ENCODE measurements at regions of chr5 and their contacts with region 1.

Region 1: DNA sequence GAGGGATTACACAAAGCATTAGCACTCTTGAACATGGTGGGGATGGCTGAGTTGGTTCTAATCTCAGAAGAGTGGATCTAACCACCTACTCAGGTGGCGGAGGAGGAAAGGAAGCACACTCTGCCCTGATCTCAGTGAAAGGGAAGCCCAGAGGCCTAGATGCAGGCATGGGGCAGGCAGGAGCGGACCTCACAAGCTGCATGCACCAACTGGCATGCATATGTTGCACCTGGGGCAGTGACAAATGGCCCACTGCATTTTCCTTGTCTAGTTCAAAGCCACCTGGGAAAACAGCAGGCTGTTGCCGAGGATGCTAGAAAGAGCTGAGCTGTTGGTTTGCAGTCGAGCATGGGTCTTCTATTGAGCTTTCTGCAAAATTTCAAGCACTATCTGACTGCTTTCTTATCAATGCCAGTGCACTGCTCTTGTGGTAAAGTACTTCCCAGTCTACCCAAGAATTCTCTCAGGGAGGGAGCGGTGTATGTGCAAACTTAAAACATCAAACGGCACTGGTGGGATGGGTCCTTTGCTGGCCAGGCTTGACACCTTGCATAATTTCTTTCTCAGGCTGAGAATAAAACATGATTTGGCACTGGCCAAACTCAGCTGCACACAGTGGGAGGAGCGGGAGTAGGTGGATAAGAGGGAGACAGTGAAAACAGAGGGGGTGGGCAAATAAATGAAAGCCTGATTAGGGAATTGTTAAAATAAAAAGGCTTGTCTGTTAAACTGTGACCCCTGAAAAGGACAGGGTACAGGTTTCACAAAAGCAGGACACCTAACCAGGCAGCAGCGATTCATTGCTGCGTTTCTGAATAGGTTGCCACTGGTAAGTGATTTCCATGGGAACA is 108.9 kb downstream of the MARCHF3 start:
- DNase-seq: no peak
- ATAC-seq: no peak
- H3K4me3 Mint-ChIP-seq: no peak overlapping the region
- H3K27ac Mint-ChIP-seq: no peak overlapping the region
- H3K4me1 Mint-ChIP-seq: no peaks in the 10 kb centered on the region
- H3K27me3 Mint-ChIP-seq: no peaks in the 10 kb centered on the region

Region 2: DNA sequence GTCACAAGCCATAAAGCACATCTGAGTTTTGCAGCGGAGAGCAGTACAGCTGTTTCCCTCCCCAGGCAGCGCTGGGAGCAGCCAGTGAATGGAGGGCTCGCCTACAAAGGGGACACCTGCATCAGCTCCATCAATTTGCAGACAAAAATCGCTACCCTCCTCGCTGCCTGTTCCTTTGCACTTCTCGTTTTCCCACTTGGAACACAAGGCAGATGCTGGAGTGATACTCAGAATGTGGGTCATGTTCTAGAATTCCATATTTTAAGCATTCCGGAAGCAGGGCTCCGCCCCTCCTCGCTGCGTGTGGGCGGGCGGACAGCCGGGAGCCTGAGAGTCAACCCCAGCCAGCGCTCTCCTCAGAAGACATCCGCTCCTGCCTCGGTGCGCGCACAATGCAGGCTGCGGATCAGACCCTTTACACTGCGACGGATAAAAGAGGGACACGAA is 52.4 kb before region 1 on chr5:
- CTCF ChIA-PET with region 1: no interaction called
- POLR2A ChIA-PET with region 1: no interaction called
- intact Hi-C with region 1: no loop called
- DNase-seq: peak; percentile 55
- ATAC-seq: peak; percentile 83
- H3K4me3 Mint-ChIP-seq: peak overlapping the region; percentile 57
- H3K27ac Mint-ChIP-seq: peak overlapping the region; percentile 32
- H3K4me1 Mint-ChIP-seq: peaks cover 10% of the 10 kb centered on the region
- H3K27me3 Mint-ChIP-seq: no peaks in the 10 kb centered on the region

Region 3: GRCh38 chr5:126965061-126965475 is 43.6 kb after region 1 on chr5:
- CTCF ChIA-PET with region 1: no interaction called
- POLR2A ChIA-PET with region 1: interaction called, 10 read pairs
- intact Hi-C with region 1: no loop called
- DNase-seq: no peak
- ATAC-seq: no peak
- H3K4me3 Mint-ChIP-seq: no peak overlapping the region
- H3K27ac Mint-ChIP-seq: no peak overlapping the region
- H3K4me1 Mint-ChIP-seq: no peaks in the 10 kb centered on the region
- H3K27me3 Mint-ChIP-seq: no peaks in the 10 kb centered on the region